ENCODE measurements at regions of chr3 and their contacts with region 1.

Region 1: DNA sequence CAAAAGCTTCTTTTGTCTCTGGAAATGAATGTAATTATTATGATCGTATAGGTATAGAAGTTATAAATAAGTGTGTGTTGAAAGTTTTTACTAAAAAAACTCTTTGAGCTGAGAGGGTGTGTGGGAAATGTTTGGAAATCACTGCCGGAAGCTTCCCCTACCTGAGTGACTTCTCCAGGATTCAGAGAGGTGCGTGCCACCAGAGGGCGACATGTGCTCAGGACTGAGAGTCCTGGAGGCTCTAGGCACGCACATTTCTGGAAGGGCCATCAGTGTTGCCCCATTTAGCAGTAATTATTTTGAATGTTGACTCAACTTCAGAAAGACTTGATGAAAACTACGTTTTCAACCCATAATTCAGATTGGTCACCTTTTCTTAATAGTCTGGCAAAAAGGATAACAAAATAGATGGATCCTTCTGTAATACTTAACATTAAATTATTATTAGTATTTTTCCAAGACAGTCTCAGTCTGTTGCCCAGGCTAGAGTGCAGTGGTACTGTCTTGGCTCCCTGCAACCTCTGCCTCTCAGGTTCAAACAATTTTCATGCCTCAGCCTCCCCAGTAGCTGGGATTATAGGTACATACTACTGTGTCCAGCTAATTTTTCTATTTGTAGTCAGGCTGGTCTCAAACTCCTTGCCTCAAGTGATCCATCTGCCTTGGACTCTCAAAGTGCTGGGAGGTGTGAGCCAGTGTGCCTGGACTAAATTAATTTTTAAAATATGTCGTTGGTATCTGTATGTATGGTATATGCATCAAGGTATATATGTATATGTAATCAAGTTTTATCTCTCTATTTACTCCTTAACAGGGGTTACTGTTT is 34.5 kb downstream of the GPR171 start:
- DNase-seq: peak; percentile 53

Region 2: DNA sequence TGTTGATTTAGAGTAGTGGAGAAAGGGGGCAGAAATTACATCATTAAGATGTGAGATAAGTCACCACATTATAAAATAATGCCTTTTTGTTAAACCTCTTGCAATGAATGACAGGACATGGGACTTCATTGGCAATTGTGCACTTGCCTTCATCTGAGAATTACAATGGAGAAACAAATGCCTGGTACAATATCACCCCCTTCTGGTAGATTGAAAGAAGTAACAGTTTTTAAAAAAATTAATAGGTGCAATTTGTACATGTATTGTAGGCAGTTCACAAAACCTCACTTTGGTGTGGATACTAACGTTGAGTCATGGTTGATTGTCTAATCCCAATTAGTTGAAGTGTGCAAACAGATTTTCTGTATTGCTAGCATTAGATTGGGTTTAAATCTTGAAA is 114.4 kb after region 1 on chr3:
- in situ Hi-C with region 1: loop called (anchors 10 kb)
- DNase-seq: peak; percentile 65

Region 3: GRCh38 chr3:151460774-151461450 is 292.4 kb after region 1 on chr3 and contains the start of gene IGSF10:
- in situ Hi-C with region 1: no loop called
- DNase-seq: no peak